HepG2 (cell line): ENCODE measurements at regions of chr2 and their contacts with region 1.

Region 1: GRCh38 chr2:106582148-106583143 is 95.3 kb downstream of the CD8B2 start:
- DNase-seq: peak; percentile 79
- ATAC-seq: peak; percentile 98
- H3K4me3 ChIP-seq: peak overlapping the region in 1 of 3 experiments; percentile 47; a peak in 2 of 6 replicates
- H3K27ac ChIP-seq: no peak overlapping the region
- H3K4me1 ChIP-seq: peaks cover 17% of the 10 kb centered on the region
- H3K27me3 ChIP-seq: peaks cover 0 to 34% of the 10 kb centered on the region in 2 experiments; a peak in 2 of 5 replicates
- CTCF ChIP-seq: peak; percentile 93
- EP300 ChIP-seq: no peak
- POLR2A ChIP-seq: no peak
- RAD21 ChIP-seq: peak; percentile 68

Region 2: GRCh38 chr2:106562268-106563186 is 19.9 kb before region 1 on chr2:
- CTCF ChIA-PET with region 1: interaction called, 5 read pairs
- POLR2A ChIA-PET with region 1: no interaction called
- in situ Hi-C with region 1: no loop called
- intact Hi-C with region 1: loop called (anchors 1 kb)
- DNase-seq: no peak
- ATAC-seq: peak; percentile 54
- H3K4me3 ChIP-seq: no peak overlapping the region
- H3K27ac ChIP-seq: no peak overlapping the region
- H3K4me1 ChIP-seq: no peaks in the 10 kb centered on the region
- H3K27me3 ChIP-seq: no peaks in the 10 kb centered on the region
- CTCF ChIP-seq: peak; percentile 36
- EP300 ChIP-seq: no peak
- POLR2A ChIP-seq: no peak
- RAD21 ChIP-seq: no peak

Region 3: DNA sequence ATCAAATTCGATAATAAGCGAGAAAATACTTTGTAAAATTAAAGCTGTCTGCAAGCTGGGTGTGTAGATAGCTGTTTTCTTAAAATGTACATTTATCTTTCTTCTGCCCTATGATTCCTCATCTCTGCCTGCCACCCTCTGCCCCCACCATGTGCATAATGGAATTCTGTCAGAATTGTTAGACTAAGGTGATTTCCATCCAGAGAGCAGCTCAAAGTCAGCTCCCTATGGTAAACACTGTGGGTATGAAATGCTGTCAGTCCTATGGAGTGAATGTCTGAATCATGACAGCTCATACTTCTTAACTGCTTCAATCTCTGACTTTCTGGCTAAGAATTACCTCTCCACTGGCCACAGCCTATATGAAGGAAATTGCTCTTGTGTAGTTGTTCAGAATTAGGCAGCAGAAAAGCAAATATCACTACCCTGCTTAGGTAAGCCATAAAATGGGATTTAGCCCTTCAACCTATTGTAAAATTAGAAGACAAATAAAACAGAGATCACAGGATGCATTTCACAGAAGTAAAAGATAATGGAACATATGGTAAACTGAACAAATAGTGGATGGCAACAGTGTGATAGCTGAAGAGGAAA is 42.4 kb after region 1 on chr2:
- CTCF ChIA-PET with region 1: no interaction called
- POLR2A ChIA-PET with region 1: no interaction called
- in situ Hi-C with region 1: no loop called
- intact Hi-C with region 1: no loop called
- DNase-seq: no peak
- ATAC-seq: no peak
- H3K4me3 ChIP-seq: no peak overlapping the region
- H3K27ac ChIP-seq: no peak overlapping the region
- H3K4me1 ChIP-seq: no peaks in the 10 kb centered on the region
- H3K27me3 ChIP-seq: no peaks in the 10 kb centered on the region
- CTCF ChIP-seq: no peak
- EP300 ChIP-seq: no peak
- POLR2A ChIP-seq: no peak
- RAD21 ChIP-seq: no peak